Dorsolateral prefrontal cortex (tissue), 120 donors: ENCODE measurements at regions of chr5 and their contacts with region 1.

Region 1: GRCh38 chr5:146426853-146427618 is 20.1 kb upstream of the TCERG1 start:
- DNase-seq: no peak
- H3K4me3 ChIP-seq: no peak overlapping the region
- H3K27ac ChIP-seq: no peak overlapping the region
- H3K27me3 ChIP-seq: peaks cover 0 to 4% (median 0%) of the 10 kb centered on the region in 45 donors
- CTCF ChIP-seq: peak; percentile 57 to 88 (median 74)

Region 2: DNA sequence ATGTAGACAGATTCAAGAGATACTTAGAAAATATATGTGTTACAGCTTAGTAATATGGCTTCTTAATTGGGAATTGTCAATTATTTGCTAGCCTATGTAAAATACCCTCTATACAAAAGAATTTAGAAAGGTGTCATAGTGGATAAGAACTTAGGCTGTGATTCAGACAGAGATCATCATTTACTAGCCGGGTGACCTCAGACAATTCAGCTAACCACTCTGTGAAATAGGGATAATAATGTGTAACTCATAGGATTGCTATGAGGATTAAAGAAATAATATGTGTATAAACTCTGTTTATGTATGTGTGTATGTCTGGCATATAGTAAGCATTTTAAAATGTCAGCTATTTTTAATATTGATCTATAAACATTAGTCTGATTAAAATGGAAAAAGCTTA is 238.7 kb before region 1 on chr5:
- intact Hi-C with region 1: loop called in 1 of 2 experiments (anchors 10 kb)
- DNase-seq: no peak
- H3K4me3 ChIP-seq: no peak overlapping the region
- H3K27ac ChIP-seq: no peak overlapping the region
- H3K27me3 ChIP-seq: peaks cover 0 to 6% (median 0%) of the 10 kb centered on the region in 45 donors
- CTCF ChIP-seq: no peak

Region 3: GRCh38 chr5:146291421-146292074 is 135.5 kb before region 1 on chr5:
- intact Hi-C with region 1: loop called (anchors 5 kb)
- DNase-seq: no peak
- H3K4me3 ChIP-seq: no peak overlapping the region
- H3K27ac ChIP-seq: no peak overlapping the region
- H3K27me3 ChIP-seq: no peaks in the 10 kb centered on the region
- CTCF ChIP-seq: peak; percentile 19 to 73 (median 54)

Region 4: GRCh38 chr5:146390469-146390868 is 36.6 kb before region 1 on chr5:
- intact Hi-C with region 1: no loop called
- DNase-seq: no peak
- H3K4me3 ChIP-seq: no peak overlapping the region
- H3K27ac ChIP-seq: no peak overlapping the region
- H3K27me3 ChIP-seq: peaks cover 0 to 58% (median 12%) of the 10 kb centered on the region in 45 donors
- CTCF ChIP-seq: no peak